CD8-positive, alpha-beta T cell (primary cell): ENCODE measurements at regions of chr12 and their contacts with region 1.

Region 1: GRCh38 chr12:42144408-42145196 is at the start of gene GXYLT1:
- DNase-seq: peak; percentile 59 to 87 (median 77)
- ATAC-seq: peak; percentile 87
- H3K4me3 ChIP-seq: peak within 1 kb of the TSS; percentile 79 to 80
- H3K4me3 Mint-ChIP-seq: peak within 1 kb of the TSS; percentile 91
- H3K27ac ChIP-seq: peak within 1 kb of the TSS; percentile 49 to 56
- H3K27ac Mint-ChIP-seq: peak within 1 kb of the TSS; percentile 87
- H3K4me1 ChIP-seq: peaks cover 13% of the 10 kb centered on the region
- H3K4me1 Mint-ChIP-seq: peaks cover 46% of the 10 kb centered on the region
- H3K27me3 ChIP-seq: no peaks in the 10 kb centered on the region
- H3K27me3 Mint-ChIP-seq: no peaks in the 10 kb centered on the region
- CTCF ChIP-seq: no peak
- total RNA-seq, gene GXYLT1: 8.5 to 9.2 TPM

Region 2: GRCh38 chr12:41621291-41621690 is 523.3 kb before region 1 on chr12:
- CTCF ChIA-PET with region 1: no interaction called
- POLR2A ChIA-PET with region 1: no interaction called
- intact Hi-C with region 1: no loop called
- DNase-seq: no peak
- ATAC-seq: no peak
- H3K4me3 ChIP-seq: no peak overlapping the region
- H3K4me3 Mint-ChIP-seq: no peak overlapping the region
- H3K27ac ChIP-seq: no peak overlapping the region
- H3K27ac Mint-ChIP-seq: no peak overlapping the region
- H3K4me1 ChIP-seq: no peaks in the 10 kb centered on the region
- H3K4me1 Mint-ChIP-seq: no peaks in the 10 kb centered on the region
- H3K27me3 ChIP-seq: no peaks in the 10 kb centered on the region
- H3K27me3 Mint-ChIP-seq: no peaks in the 10 kb centered on the region
- CTCF ChIP-seq: no peak

Region 3: DNA sequence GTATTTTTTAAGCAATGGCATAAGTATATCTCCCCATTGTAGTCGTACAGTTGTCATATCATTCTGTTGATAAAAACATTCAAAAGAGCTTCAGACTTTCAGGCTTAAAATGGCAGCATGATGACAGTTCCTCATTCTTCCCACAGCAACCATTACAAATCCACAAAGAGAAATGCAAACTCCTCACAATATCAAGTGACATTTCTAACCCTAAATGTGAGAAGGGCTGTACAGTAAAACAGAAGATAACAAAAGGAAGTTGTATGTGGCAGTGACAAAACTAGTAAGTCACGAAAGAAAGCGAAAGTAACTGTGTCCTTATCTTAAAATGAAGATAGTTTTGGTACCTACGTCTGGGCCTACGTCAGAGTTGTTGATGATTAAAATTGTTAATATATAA is 46.6 kb before region 1 on chr12:
- CTCF ChIA-PET with region 1: no interaction called
- POLR2A ChIA-PET with region 1: interaction called, 5 read pairs
- intact Hi-C with region 1: loop called (anchors 2 kb)
- DNase-seq: peak in 2 of 9 experiments; percentile 69 to 86
- ATAC-seq: peak; percentile 86
- H3K4me3 ChIP-seq: peak overlapping the region; percentile 39 to 53
- H3K4me3 Mint-ChIP-seq: peak overlapping the region; percentile 92
- H3K27ac ChIP-seq: peak overlapping the region; percentile 89
- H3K27ac Mint-ChIP-seq: peak overlapping the region; percentile 99
- H3K4me1 ChIP-seq: peaks cover 35% of the 10 kb centered on the region
- H3K4me1 Mint-ChIP-seq: peaks cover 50% of the 10 kb centered on the region
- H3K27me3 ChIP-seq: no peaks in the 10 kb centered on the region
- H3K27me3 Mint-ChIP-seq: no peaks in the 10 kb centered on the region
- CTCF ChIP-seq: no peak

Region 4: GRCh38 chr12:42129595-42130204 is 14.9 kb before region 1 on chr12:
- CTCF ChIA-PET with region 1: interaction called, 3 read pairs
- POLR2A ChIA-PET with region 1: no interaction called
- intact Hi-C with region 1: loop called in 1 of 2 experiments (anchors 1 kb)
- DNase-seq: peak in 2 of 9 experiments; percentile 43 to 57
- ATAC-seq: peak; percentile 55
- H3K4me3 ChIP-seq: no peak overlapping the region
- H3K4me3 Mint-ChIP-seq: no peak overlapping the region
- H3K27ac ChIP-seq: no peak overlapping the region
- H3K27ac Mint-ChIP-seq: no peak overlapping the region
- H3K4me1 ChIP-seq: peaks cover 4% of the 10 kb centered on the region
- H3K4me1 Mint-ChIP-seq: peaks cover 49% of the 10 kb centered on the region
- H3K27me3 ChIP-seq: no peaks in the 10 kb centered on the region
- H3K27me3 Mint-ChIP-seq: no peaks in the 10 kb centered on the region
- CTCF ChIP-seq: peak; percentile 42

Region 5: DNA sequence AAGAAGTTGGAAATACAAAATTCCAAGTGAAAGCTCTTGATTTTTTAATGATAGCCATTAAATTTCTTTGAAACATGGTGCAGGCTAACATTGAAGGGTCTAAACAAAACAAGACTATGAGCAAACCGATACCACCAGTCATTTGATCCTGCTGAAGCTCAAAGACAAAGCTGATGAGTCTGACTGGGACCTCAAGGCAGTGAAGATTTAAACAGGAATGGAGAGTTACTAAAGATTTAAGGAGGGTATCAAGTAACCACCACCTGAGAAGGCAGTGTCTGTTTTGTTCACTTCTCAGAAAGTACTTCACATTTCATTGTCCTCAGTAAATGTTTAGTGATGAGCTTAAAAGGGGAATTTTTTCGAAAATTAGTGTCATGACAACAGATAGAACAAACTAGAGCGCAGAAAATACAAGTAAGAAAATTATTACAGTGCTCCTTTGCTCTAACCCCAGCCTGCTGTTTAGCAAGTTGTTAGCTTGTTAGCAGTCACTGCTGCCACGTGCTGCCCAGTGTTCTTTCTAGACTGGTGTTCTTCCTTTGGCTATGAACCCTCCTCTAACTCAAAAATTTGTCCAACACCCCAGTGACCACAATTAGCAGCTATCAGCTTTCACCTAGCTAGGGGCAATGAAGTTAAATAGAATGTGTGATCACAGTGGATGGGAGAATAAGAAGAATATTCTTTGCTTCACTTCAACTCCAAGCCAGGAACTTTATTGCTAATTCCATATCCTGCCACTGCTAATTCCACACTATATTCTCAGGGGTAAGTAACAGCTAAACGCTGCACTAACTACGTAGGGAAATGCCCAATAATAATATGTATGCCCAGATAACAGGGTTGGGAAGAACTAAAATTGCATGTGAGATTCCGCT is 52.4 kb after region 1 on chr12:
- CTCF ChIA-PET with region 1: no interaction called
- POLR2A ChIA-PET with region 1: no interaction called
- intact Hi-C with region 1: loop called in 1 of 2 experiments (anchors 5 kb)
- DNase-seq: no peak
- ATAC-seq: no peak
- H3K4me3 ChIP-seq: no peak overlapping the region
- H3K4me3 Mint-ChIP-seq: no peak overlapping the region
- H3K27ac ChIP-seq: no peak overlapping the region
- H3K27ac Mint-ChIP-seq: no peak overlapping the region
- H3K4me1 ChIP-seq: no peaks in the 10 kb centered on the region
- H3K4me1 Mint-ChIP-seq: peaks cover 14% of the 10 kb centered on the region
- H3K27me3 ChIP-seq: no peaks in the 10 kb centered on the region
- H3K27me3 Mint-ChIP-seq: no peaks in the 10 kb centered on the region
- CTCF ChIP-seq: no peak

Region 6: GRCh38 chr12:42325653-42326474 is 181.3 kb after region 1 on chr12 and contains the starts of genes PPHLN1 and ZCRB1:
- CTCF ChIA-PET with region 1: interaction called, 3 read pairs
- POLR2A ChIA-PET with region 1: no interaction called
- intact Hi-C with region 1: loop called (anchors 1 to 2 kb)
- DNase-seq: peak; percentile 54 to 89 (median 78)
- ATAC-seq: peak; percentile 89
- H3K4me3 ChIP-seq: peak within 1 kb of the TSS; percentile 68 to 95
- H3K4me3 Mint-ChIP-seq: peak within 1 kb of the TSS; percentile 98
- H3K27ac ChIP-seq: peak within 1 kb of the TSS; percentile 79 to 91
- H3K27ac Mint-ChIP-seq: peak within 1 kb of the TSS; percentile 98
- H3K4me1 ChIP-seq: peaks cover 24% of the 10 kb centered on the region
- H3K4me1 Mint-ChIP-seq: peaks cover 54% of the 10 kb centered on the region
- H3K27me3 ChIP-seq: no peaks in the 10 kb centered on the region
- H3K27me3 Mint-ChIP-seq: no peaks in the 10 kb centered on the region
- CTCF ChIP-seq: no peak
- total RNA-seq, gene PPHLN1: 104 to 108 TPM
- total RNA-seq, gene ZCRB1: 35.7 to 39.4 TPM